Posterior cingulate gyrus (tissue), 11 donors: ENCODE measurements at regions of chr7 and their contacts with region 1.

Region 1: DNA sequence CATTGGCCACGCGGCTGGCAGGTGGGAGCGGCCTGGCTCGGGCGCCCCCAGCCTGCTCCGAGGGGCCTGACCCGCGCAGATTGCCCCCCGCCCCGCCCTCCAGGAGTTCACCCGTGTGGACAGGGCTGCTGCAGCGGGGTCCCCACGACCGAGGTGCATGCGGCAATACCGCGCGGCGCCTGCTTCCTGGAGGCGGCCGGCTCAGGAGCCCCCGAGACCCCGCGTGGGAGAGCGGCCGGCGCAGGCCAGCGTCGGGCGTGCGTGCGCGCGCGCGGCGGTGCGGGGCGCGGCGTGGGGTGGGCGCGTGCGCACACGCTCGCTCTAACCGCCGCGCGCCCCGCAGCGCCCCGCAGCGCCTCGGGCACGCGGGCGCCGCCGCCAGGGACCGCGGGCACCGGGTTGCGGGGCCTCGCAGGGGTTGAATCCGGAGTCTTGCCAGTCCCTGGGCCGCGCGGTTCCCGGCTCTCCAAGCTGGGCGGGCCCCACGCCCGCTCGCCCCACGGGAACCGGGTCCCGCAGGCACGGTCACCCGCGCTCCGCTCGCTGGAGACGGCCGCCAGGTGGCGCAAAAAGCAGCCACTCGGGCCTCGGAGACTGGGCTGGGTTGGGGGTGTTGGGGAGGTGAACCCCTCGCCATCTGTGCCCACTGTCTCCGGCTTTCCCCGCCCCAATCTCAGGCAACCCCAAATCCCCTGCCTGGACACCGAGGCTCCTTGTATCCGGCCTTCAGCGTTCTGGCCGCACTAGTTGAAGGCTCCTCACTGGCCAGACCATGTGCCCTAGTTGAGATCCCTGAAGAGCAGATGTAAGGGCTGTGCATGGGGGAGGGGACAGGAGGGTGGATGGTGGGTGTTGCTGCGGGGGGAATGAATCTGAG is 1.3 kb upstream of the ACHE start:
- DNase-seq: peak in 8 of 10 donors; percentile 54 to 92 (median 79)

Region 2: GRCh38 chr7:100673300-100673941 is 223.5 kb before region 1 on chr7 and contains the start of gene GNB2:
- intact Hi-C with region 1: no loop called
- DNase-seq: peak; percentile 99 to 100 (median 99)

Region 3: DNA sequence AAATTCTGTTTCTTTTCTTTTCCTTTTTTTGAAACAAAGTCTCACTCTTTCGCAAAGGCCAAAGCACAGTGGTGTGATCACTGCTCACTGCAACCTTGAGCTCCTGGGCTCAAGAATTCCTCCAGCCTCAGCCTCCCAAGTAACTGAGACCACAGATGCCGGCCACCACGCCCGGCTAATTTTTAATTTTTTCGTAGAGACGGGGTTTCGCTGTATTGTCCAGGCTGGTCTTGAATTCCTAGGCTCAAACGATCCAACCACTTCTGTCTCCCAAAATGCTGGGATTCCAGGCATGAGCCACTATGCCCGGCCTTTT is 162.6 kb after region 1 on chr7:
- intact Hi-C with region 1: loop called (anchors 1 kb)
- DNase-seq: no peak

Region 4: DNA sequence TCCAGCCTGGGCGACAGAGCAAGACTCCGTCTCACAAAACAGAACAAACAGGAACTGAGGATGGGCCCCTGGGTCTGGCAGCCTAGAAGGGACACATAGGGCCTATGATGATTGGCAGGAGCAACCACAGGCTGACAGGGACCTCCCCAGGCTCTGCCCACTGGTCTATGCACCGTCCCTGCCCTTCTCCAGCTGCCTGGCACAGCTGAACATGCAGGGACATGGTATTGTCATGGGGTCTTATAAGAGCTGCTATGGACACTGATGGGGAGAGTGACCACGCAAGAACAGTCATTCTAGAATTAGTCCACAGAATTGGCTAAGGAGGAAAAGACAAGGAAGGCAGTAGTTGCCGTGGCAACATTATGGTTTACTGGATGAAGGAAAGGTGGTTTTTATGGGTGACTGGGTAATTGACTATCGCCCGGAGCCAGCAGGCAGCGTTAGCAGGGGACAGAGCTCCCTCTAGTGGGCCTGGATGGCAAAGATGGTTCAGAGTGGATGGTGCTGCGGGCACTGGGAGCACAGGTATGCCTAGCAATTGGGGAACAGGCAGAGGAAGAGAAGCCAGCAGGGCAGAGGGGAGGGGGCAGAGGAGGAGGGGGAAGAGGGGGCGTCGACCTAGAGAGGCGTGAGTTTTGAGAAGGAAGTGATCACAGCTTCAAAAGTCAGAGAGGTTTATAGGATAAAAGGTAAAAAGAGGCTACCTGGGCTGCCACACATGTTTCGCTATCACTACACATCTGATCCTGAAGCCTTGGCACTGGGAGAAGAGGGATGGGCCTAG is 180.5 kb after region 1 on chr7:
- intact Hi-C with region 1: loop called (anchors 1 kb)
- DNase-seq: peak; percentile 58 to 96 (median 82)